ENCODE measurements at regions of chr1 and their contacts with region 1.

Region 1: DNA sequence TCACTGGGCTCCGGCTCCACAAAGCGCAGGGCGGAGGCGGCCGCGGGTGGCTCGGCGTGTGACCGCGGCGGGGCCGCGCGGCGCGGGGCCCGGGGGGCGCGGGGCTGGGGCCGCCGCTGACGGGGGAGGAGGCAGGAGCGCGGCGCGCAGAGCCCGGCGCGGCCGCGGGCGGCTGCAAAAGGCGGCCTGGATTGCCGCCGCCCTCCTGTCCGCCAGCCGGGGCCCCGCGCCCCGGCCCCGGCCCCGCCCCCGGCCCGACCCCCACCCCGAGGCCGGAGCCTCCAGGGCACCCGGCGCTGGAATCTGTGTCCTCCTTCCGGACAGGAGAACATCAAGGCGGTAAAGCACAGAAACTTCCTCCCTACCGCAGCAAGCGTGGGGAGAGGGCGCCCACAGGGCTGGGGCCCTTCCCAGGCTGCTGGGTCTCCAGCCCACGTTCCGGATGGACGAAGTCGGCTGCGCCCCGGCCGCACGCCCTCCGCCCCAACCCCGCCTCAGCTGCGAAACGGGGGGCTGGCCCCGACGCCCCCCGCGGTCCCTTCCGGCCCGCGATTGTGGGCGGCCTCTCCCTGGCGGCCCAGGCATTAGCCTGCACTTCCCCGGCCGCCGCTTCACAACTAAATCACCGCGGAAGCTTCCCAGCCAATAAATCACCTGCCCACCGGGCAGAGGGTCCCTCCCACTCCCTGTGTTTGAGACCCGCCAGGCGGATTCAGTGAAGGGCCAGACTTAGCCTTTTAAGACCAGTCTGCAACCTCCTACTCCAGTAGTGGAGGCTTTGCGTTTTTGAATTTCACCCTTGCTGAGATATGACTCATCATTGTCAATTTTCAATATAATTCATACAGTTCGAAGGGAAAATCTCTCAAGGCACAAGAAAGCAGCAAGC is 106.0 kb downstream of the SLC45A1 start:
- DNase-seq: peak in 9 of 10 donors; percentile 21 to 73 (median 38)
- ATAC-seq: peak; percentile 51
- H3K4me3 Mint-ChIP-seq: peak overlapping the region in 9 of 10 donors; percentile 88 to 96 (median 94)
- H3K27ac Mint-ChIP-seq: peak overlapping the region; percentile 91 to 98 (median 96)
- H3K4me1 Mint-ChIP-seq: peaks cover 29 to 50% (median 47%) of the 10 kb centered on the region in 4 donors
- H3K27me3 Mint-ChIP-seq: no peaks in the 10 kb centered on the region

Region 2: GRCh38 chr1:8314346-8315280 is 109.3 kb before region 1 on chr1:
- POLR2A ChIA-PET with region 1: no interaction called
- DNase-seq: peak in 9 of 10 donors; percentile 22 to 55 (median 41)
- ATAC-seq: peak in 1 of 2 donors; percentile 31
- H3K4me3 Mint-ChIP-seq: no peak overlapping the region
- H3K27ac Mint-ChIP-seq: peak overlapping the region in 2 of 10 donors; percentile 15 to 72
- H3K4me1 Mint-ChIP-seq: peaks cover 10 to 36% (median 17%) of the 10 kb centered on the region in 4 donors
- H3K27me3 Mint-ChIP-seq: peaks cover 15 to 46% (median 30%) of the 10 kb centered on the region in 5 donors

Region 3: GRCh38 chr1:8373581-8374241 is 50.2 kb before region 1 on chr1:
- POLR2A ChIA-PET with region 1: no interaction called
- DNase-seq: no peak
- ATAC-seq: no peak
- H3K4me3 Mint-ChIP-seq: peak overlapping the region in 1 of 10 donors; percentile 60
- H3K27ac Mint-ChIP-seq: peak overlapping the region in 1 of 10 donors; percentile 30
- H3K4me1 Mint-ChIP-seq: peaks cover 31 to 70% (median 40%) of the 10 kb centered on the region in 4 donors
- H3K27me3 Mint-ChIP-seq: no peaks in the 10 kb centered on the region

Region 4: DNA sequence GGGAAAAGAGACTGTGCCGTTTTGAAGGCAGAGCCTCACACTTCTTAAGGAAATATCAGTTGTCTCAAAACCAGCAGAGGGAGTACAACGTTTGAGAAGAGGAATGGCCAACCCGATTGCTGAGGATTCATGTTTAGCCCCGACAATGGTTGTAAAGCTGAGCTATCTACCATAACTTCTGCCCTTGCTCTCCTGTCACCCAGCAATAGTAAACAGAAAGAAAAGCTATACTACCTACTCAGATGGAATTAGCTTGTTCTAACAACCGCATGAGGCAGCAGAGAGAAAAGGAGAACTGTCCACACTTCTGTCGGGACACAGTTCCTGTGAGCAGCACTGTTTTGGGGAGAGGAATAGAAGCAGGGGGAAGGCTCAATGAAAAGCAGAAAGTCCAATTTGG is 14.8 kb before region 1 on chr1:
- POLR2A ChIA-PET with region 1: interaction called, 12 read pairs
- DNase-seq: peak in 2 of 10 donors; percentile 20 to 35
- ATAC-seq: peak; percentile 66 to 72
- H3K4me3 Mint-ChIP-seq: peak overlapping the region in 8 of 10 donors; percentile 4 to 70 (median 40)
- H3K27ac Mint-ChIP-seq: peak overlapping the region in 9 of 10 donors; percentile 4 to 87 (median 60)
- H3K4me1 Mint-ChIP-seq: peaks cover 37 to 70% (median 60%) of the 10 kb centered on the region in 4 donors
- H3K27me3 Mint-ChIP-seq: no peaks in the 10 kb centered on the region

Region 5: DNA sequence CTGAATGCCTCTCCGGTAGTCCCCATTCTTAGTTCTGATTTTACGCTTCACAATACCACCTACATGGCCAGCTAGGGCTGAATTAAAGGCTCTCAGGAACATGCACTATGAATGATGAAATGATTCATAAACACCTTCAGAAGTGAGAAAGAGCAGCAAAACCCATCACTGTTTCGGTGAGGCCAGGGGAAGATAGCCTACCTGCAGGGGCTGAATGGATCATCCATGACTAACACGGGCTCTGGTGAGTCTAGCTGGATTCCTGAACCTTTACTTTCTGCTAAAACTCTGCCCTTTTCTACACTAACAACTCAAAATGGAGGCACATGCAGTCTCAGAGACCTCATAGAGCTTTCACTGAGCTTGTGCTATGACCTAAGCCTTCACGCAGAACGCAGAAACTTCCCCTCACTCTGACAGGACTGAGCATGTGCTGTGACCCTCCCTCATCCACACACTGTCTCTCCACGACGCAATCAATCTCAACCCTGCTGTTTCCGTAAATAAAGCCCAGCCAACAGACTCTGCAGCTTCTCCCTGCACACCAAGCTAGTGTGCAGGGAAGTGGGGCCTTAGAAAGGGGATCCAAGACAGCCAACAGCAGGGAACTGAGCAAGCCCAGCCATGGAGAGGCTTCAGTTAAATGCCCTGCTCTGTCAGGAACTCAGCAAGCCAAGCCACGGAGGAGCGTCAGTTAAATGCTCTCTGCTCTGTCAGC is 101.8 kb after region 1 on chr1:
- POLR2A ChIA-PET with region 1: interaction called, 11 read pairs
- DNase-seq: peak; percentile 37 to 87 (median 74)
- ATAC-seq: peak; percentile 93 to 96
- H3K4me3 Mint-ChIP-seq: no peak overlapping the region
- H3K27ac Mint-ChIP-seq: no peak overlapping the region
- H3K4me1 Mint-ChIP-seq: peaks cover 21 to 50% (median 25%) of the 10 kb centered on the region in 4 donors
- H3K27me3 Mint-ChIP-seq: no peaks in the 10 kb centered on the region

Region 6: GRCh38 chr1:8571200-8571984 is 147.5 kb after region 1 on chr1:
- POLR2A ChIA-PET with region 1: no interaction called
- DNase-seq: no peak
- ATAC-seq: no peak
- H3K4me3 Mint-ChIP-seq: no peak overlapping the region
- H3K27ac Mint-ChIP-seq: peak overlapping the region in 1 of 10 donors; percentile 29
- H3K4me1 Mint-ChIP-seq: peaks cover 0 to 10% (median 1%) of the 10 kb centered on the region in 4 donors
- H3K27me3 Mint-ChIP-seq: no peaks in the 10 kb centered on the region

Region 7: DNA sequence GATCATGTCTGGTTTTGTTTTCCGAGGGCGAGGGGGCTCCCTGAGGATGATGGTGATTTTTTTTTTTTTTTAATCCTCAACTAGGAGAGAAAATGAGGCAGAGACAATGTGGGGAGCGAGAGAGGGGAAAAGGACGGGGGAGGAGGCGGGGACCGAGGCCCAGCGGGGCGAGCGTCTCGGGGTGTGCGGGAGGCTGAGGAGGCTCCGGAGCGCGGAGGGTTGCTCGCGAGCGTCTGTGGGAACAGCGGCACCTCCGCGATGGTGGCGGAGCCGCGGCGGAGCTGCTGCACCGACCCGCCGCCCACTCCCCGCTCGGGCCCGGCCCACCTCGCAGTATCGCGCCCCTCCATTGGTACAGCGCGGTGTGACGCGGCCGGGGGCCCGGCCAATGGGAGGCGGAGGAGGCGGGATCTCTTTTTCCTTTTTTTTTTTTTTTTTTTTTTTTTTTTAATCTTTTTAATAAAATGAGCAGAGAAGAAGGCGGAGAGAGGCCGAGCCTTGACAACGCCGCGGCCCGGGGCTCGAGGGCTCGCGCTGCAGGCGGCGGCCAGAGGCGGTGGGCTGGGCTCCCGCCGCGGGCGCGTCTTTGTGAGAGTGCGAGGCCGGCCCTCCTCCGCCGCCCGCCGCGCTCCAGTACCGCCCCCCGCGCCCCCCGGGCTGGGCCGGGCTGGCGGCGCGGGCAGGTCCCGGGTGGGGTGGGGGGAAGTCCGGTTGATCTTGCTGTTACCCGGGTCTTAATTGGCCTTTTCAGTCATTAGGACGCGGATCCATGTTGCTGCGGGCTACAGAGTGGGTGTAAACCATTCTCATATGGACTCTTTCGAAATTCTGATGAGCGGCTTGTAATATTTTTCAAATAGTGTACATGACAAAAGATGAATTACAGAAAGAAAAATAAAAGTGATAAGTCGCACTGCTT is 393.8 kb after region 1 on chr1 and contains the start of gene RERE:
- POLR2A ChIA-PET with region 1: interaction called, 10 read pairs
- DNase-seq: peak; percentile 93 to 99 (median 97)
- ATAC-seq: peak; percentile 93 to 95
- H3K4me3 Mint-ChIP-seq: peak within 1 kb of the TSS; percentile 90 to 98 (median 94)
- H3K27ac Mint-ChIP-seq: peak within 1 kb of the TSS; percentile 90 to 98 (median 95)
- H3K4me1 Mint-ChIP-seq: peaks cover 28 to 43% (median 41%) of the 10 kb centered on the region in 4 donors
- H3K27me3 Mint-ChIP-seq: peaks cover 0 to 3% (median 0%) of the 10 kb centered on the region in 5 donors
- polyA plus RNA-seq, gene RERE: 4.1 to 8.8 (median 4.9) TPM